Cardiac septum (tissue), 1 donor: ENCODE measurements at regions of chr15 and their contacts with region 1.

Region 1: DNA sequence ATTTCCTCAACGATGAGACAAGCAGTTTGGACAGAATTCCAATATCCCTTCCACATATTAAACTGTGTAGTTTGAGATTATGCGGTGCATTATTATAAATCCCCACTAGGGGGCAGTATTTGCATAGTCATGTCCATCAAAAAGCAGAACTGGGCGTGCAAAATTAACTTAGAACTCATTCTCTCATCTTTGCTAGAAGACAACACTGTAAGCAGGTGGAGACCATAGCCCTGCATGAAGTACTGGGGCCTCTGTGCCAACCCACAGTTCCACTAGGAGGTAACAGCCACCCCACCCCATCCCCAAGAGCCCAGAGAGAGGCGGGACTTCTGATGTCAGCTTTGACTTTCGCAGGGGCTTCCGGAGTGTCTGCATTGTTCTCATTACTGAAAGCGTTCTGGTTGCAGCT is 106.6 kb upstream of the TMC3 start:
- DNase-seq: no peak

Region 2: GRCh38 chr15:81939604-81940440 is 459.2 kb after region 1 on chr15:
- intact Hi-C with region 1: loop called (anchors 10 kb)
- DNase-seq: no peak

Region 3: GRCh38 chr15:82046666-82047452 is 566.2 kb after region 1 on chr15:
- intact Hi-C with region 1: loop called (anchors 5 kb)
- DNase-seq: peak; percentile 94

Region 4: DNA sequence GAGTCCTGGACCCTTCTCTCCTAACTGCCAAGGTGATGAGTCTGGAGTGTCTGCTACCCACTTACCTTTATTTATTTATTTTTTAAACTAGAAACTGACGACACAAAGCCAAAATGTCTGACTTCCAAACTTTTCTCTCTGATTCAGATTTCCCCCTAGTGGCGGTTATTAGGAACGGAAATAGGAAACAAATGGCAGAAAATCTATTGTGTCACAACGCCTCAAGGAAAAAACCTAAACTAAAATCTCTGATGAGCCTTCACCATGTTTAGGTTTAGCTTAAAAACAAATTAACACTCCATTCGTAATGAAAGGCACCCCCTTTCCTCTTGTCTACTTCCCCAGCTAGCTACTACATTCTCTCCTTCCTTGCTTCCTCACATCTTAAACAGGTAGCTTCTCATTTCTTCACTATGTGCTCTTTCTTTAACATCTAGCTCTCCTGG is 659.2 kb after region 1 on chr15:
- intact Hi-C with region 1: loop called (anchors 5 kb)
- DNase-seq: no peak

Region 5: GRCh38 chr15:82197733-82198594 is 717.3 kb after region 1 on chr15:
- intact Hi-C with region 1: loop called (anchors 5 kb)
- DNase-seq: no peak